IMR-90 (cell line): ENCODE measurements at regions of chr17 and their contacts with region 1.

Region 1: GRCh38 chr17:64736804-64737492 is 74.8 kb upstream of the SMURF2 start:
- DNase-seq: peak; percentile 72
- ATAC-seq: peak; percentile 24
- H3K4me3 ChIP-seq: no peak overlapping the region
- H3K27ac ChIP-seq: no peak overlapping the region
- H3K4me1 ChIP-seq: peaks cover 32% of the 10 kb centered on the region
- H3K27me3 ChIP-seq: no peaks in the 10 kb centered on the region
- CTCF ChIP-seq: peak; percentile 64
- POLR2A ChIP-seq: no peak
- RAD21 ChIP-seq: peak; percentile 73

Region 2: GRCh38 chr17:64648234-64648633 is 88.7 kb before region 1 on chr17:
- CTCF ChIA-PET with region 1: interaction called, 5 read pairs
- POLR2A ChIA-PET with region 1: no interaction called
- dilution Hi-C with region 1: no loop called
- in situ Hi-C with region 1: no loop called
- intact Hi-C with region 1: loop called (anchors 2 kb)
- DNase-seq: no peak
- ATAC-seq: no peak
- H3K4me3 ChIP-seq: no peak overlapping the region
- H3K27ac ChIP-seq: peak overlapping the region; percentile 7; the same call in 1 of the 2 replicates
- H3K4me1 ChIP-seq: peaks cover 3% of the 10 kb centered on the region
- H3K27me3 ChIP-seq: no peaks in the 10 kb centered on the region
- CTCF ChIP-seq: no peak
- POLR2A ChIP-seq: no peak
- RAD21 ChIP-seq: no peak

Region 3: DNA sequence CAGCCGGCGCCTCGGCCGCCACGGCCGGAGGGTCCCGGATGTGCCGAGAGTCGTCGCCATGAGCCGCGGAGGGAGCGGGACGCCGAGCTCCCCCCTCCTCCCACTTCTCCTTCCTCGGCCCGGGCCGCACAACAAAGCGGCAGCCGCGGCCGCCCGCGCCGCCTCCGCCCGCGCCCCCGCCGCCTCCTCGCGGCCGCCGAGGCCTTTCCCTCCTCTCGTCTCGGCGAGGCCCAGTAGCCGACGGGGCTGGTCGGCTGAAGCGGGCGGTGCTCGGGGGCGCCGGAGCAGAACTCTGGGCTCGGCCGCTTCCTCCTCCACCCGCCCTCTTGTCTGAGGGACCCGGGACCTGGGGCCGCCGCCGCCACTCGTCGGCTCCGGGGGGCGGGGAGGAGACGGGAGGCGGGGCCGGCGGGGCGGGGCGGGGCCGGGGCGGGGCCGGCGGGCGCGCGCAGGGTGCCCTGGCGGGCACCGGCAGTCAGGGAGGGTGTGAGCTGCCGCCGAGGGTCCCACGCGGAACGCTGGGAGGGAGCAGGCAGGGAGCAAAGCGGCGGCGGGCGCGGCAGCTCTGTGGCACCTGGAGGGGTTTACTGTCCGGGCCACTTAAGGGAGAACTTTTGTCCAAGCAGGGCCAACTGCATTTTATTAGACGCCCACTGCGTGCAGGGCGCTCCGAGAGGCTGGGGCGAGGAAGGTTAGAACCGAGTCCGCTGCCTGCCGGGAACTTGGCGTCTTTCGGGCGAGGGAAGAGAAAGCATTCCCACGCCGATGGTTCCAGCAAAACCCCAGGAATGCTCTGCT is 74.8 kb before region 1 on chr17 and contains the start of gene SMURF2:
- CTCF ChIA-PET with region 1: interaction called, 3 read pairs
- POLR2A ChIA-PET with region 1: no interaction called
- dilution Hi-C with region 1: no loop called
- in situ Hi-C with region 1: loop called (anchors 5 kb)
- intact Hi-C with region 1: loop called (anchors 2 kb)
- DNase-seq: peak; percentile 61
- ATAC-seq: peak; percentile 82
- H3K4me3 ChIP-seq: peak within 1 kb of the TSS; percentile 85
- H3K27ac ChIP-seq: peak within 1 kb of the TSS; percentile 99
- H3K4me1 ChIP-seq: peaks cover 11% of the 10 kb centered on the region
- H3K27me3 ChIP-seq: no peaks in the 10 kb centered on the region
- CTCF ChIP-seq: no peak
- POLR2A ChIP-seq: peak; percentile 96
- RAD21 ChIP-seq: no peak
- total RNA-seq, gene SMURF2: 736 and 774 TPM in 2 replicates

Region 4: GRCh38 chr17:64687961-64688360 is 49.0 kb before region 1 on chr17:
- CTCF ChIA-PET with region 1: no interaction called
- POLR2A ChIA-PET with region 1: interaction called, 24 read pairs
- dilution Hi-C with region 1: no loop called
- in situ Hi-C with region 1: no loop called
- intact Hi-C with region 1: loop called (anchors 5 kb)
- DNase-seq: peak; percentile 80
- ATAC-seq: peak; percentile 50
- H3K4me3 ChIP-seq: no peak overlapping the region
- H3K27ac ChIP-seq: peak overlapping the region; percentile 54
- H3K4me1 ChIP-seq: peaks cover 19% of the 10 kb centered on the region
- H3K27me3 ChIP-seq: no peaks in the 10 kb centered on the region
- CTCF ChIP-seq: no peak
- POLR2A ChIP-seq: no peak
- RAD21 ChIP-seq: no peak

Region 5: GRCh38 chr17:65345261-65346005 is 608.5 kb after region 1 on chr17:
- CTCF ChIA-PET with region 1: no interaction called
- POLR2A ChIA-PET with region 1: no interaction called
- dilution Hi-C with region 1: no loop called
- in situ Hi-C with region 1: no loop called
- intact Hi-C with region 1: no loop called
- DNase-seq: no peak
- ATAC-seq: no peak
- H3K4me3 ChIP-seq: no peak overlapping the region
- H3K27ac ChIP-seq: no peak overlapping the region
- H3K4me1 ChIP-seq: no peaks in the 10 kb centered on the region
- H3K27me3 ChIP-seq: peaks cover 2% of the 10 kb centered on the region
- CTCF ChIP-seq: no peak
- POLR2A ChIP-seq: no peak
- RAD21 ChIP-seq: no peak